B cell (primary cell): ENCODE measurements at regions of chr13 and their contacts with region 1.

Region 1: GRCh38 chr13:48975856-48976575 is at the start of gene FNDC3A:
- DNase-seq: peak; percentile 93
- ATAC-seq: peak; percentile 78
- H3K4me3 ChIP-seq: peak within 1 kb of the TSS; percentile 85 to 95 (median 88)
- H3K4me3 Mint-ChIP-seq: peak within 1 kb of the TSS; percentile 98
- H3K27ac ChIP-seq: peak within 1 kb of the TSS; percentile 95 to 96
- H3K27ac Mint-ChIP-seq: peak within 1 kb of the TSS; percentile 100
- H3K4me1 ChIP-seq: peaks cover 40 to 46% of the 10 kb centered on the region in 2 donors
- H3K4me1 Mint-ChIP-seq: peaks cover 45% of the 10 kb centered on the region
- H3K27me3 ChIP-seq: no peaks in the 10 kb centered on the region
- H3K27me3 Mint-ChIP-seq: no peaks in the 10 kb centered on the region
- CTCF ChIP-seq: no peak
- total RNA-seq, gene FNDC3A: 37.1 and 38.6 TPM in 2 replicates

Region 2: GRCh38 chr13:48000778-48001628 is 975.0 kb before region 1 on chr13 and contains the start of gene SUCLA2:
- CTCF ChIA-PET with region 1: no interaction called
- POLR2A ChIA-PET with region 1: no interaction called
- intact Hi-C with region 1: loop called (anchors 2 kb)
- DNase-seq: peak; percentile 90
- ATAC-seq: peak; percentile 100
- H3K4me3 ChIP-seq: peak within 1 kb of the TSS; percentile 72 to 89 (median 79)
- H3K4me3 Mint-ChIP-seq: peak within 1 kb of the TSS; percentile 95
- H3K27ac ChIP-seq: peak within 1 kb of the TSS; percentile 43 to 82
- H3K27ac Mint-ChIP-seq: peak within 1 kb of the TSS; percentile 72
- H3K4me1 ChIP-seq: peaks cover 13% of the 10 kb centered on the region in 2 donors
- H3K4me1 Mint-ChIP-seq: peaks cover 30% of the 10 kb centered on the region
- H3K27me3 ChIP-seq: no peaks in the 10 kb centered on the region
- H3K27me3 Mint-ChIP-seq: no peaks in the 10 kb centered on the region
- CTCF ChIP-seq: no peak
- total RNA-seq, gene SUCLA2: 33.7 and 33.9 TPM in 2 replicates

Region 3: DNA sequence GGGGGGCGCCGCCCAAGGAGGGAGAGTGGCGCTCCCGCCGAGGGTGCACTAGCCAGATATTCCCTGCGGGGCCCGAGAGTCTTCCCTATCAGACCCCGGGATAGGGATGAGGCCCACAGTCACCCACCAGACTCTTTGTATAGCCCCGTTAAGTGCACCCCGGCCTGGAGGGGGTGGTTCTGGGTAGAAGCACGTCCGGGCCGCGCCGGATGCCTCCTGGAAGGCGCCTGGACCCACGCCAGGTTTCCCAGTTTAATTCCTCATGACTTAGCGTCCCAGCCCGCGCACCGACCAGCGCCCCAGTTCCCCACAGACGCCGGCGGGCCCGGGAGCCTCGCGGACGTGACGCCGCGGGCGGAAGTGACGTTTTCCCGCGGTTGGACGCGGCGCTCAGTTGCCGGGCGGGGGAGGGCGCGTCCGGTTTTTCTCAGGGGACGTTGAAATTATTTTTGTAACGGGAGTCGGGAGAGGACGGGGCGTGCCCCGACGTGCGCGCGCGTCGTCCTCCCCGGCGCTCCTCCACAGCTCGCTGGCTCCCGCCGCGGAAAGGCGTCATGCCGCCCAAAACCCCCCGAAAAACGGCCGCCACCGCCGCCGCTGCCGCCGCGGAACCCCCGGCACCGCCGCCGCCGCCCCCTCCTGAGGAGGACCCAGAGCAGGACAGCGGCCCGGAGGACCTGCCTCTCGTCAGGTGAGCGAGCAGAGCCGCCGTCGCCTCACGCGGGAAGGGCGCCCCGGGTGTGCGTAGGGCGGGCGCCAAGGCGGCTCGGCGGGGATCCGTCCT is 672.5 kb before region 1 on chr13 and contains the start of gene RB1:
- CTCF ChIA-PET with region 1: no interaction called
- POLR2A ChIA-PET with region 1: no interaction called
- intact Hi-C with region 1: loop called (anchors 2 kb)
- DNase-seq: peak; percentile 97
- ATAC-seq: peak; percentile 69
- H3K4me3 ChIP-seq: peak within 1 kb of the TSS; percentile 70 to 98 (median 89)
- H3K4me3 Mint-ChIP-seq: peak within 1 kb of the TSS; percentile 99
- H3K27ac ChIP-seq: peak within 1 kb of the TSS; percentile 99 to 100
- H3K27ac Mint-ChIP-seq: peak within 1 kb of the TSS; percentile 100
- H3K4me1 ChIP-seq: peaks cover 22 to 26% of the 10 kb centered on the region in 2 donors
- H3K4me1 Mint-ChIP-seq: peaks cover 34% of the 10 kb centered on the region
- H3K27me3 ChIP-seq: no peaks in the 10 kb centered on the region
- H3K27me3 Mint-ChIP-seq: no peaks in the 10 kb centered on the region
- CTCF ChIP-seq: no peak
- total RNA-seq, gene RB1: 70.4 and 74.8 TPM in 2 replicates

Region 4: DNA sequence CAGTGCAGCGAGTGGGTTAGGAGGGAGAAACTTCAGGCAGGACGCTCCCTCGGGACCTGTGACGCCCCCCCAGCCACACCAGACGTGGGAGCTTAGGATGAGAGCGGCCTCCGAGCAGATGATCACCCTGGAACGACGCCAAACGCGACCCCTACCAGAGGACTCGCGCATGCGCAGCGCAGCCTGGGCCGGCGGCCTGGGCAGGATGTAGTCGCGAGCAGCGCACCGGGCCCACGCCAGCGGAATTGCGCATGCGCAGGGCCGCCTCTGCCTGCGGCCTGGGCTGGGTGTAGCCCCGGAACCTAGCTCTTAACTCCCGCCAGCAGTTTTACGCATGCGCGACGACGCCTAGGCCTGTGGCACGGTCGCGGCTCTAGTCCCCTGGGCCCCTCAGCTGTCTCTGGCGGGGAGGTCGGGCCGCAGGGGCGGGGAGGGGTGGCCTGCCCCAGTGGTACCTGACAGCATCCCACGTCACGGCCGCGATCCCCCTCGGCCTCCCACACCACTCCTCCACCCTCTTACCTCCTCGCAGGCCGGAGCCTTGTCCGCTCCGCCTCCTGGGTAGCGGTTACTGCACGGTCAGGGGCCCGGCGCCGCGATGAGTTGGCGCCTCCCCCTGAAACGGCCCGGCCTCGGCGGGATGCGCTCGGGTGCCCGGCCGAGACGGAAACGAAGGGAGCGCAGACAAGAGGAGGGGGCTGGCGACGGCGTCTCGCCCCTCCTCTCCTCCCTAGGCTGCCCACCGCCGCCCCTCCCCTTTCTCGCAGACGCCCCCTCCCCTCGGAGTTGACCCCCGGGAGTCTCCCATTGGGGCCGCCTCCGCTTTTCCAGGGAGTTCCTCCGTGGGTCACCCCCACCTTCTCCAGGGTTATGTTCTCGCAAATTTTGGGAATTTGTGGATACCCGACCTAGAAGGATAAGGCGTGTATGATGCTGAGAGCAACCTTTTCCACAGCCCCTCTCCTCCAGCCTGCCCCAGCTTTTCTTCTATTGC is 443.2 kb before region 1 on chr13 and contains the start of gene RCBTB2:
- CTCF ChIA-PET with region 1: no interaction called
- POLR2A ChIA-PET with region 1: no interaction called
- intact Hi-C with region 1: loop called (anchors 5 kb)
- DNase-seq: peak; percentile 98
- ATAC-seq: peak; percentile 89
- H3K4me3 ChIP-seq: peak within 1 kb of the TSS; percentile 54 to 92 (median 82)
- H3K4me3 Mint-ChIP-seq: peak within 1 kb of the TSS; percentile 97
- H3K27ac ChIP-seq: peak within 1 kb of the TSS; percentile 63 to 85
- H3K27ac Mint-ChIP-seq: peak within 1 kb of the TSS; percentile 98
- H3K4me1 ChIP-seq: peaks cover 20 to 24% of the 10 kb centered on the region in 2 donors
- H3K4me1 Mint-ChIP-seq: peaks cover 26% of the 10 kb centered on the region
- H3K27me3 ChIP-seq: peaks cover 0 to 15% (median 11%) of the 10 kb centered on the region in 4 experiments
- H3K27me3 Mint-ChIP-seq: peaks cover 22% of the 10 kb centered on the region
- CTCF ChIP-seq: no peak
- total RNA-seq, gene RCBTB2: 2.7 and 3.7 TPM in 2 replicates

Region 5: DNA sequence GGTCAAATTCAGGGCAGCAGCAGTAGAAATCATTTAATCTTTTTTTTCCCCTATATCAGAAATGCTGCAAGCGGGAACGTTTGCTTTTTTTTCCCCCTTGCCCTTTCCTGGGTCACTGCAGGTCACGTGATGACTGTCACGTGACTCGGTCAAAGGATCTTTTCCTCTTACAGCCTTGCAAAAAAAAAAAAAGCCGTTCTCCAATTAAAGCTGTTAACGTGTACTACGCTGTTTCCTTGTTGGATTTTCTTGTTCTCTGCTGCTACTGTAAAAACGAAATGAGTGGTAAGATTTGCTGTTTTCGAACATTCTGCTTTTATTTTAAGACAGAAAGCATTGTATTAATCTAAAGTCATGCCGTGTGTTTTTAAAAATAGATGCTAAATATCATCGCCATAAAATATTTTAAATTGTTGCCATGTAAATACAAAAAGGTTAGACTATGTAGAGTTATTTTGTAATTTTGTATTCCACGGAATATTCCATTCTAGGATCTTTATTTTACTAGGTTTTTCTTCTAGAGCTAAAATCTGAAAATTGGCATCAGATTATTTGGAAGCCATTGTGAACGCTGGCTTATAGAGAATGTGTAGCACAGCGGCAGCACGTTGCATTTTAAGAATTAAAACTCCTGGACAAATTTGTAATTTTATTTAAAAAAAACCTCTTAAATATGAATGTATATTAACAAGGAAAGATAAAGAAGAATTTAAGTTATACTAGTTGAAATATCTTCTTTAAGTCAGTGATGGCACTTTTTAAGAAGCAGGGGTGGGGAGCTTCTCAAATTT is 134.3 kb after region 1 on chr13:
- CTCF ChIA-PET with region 1: interaction called, 4 read pairs
- POLR2A ChIA-PET with region 1: no interaction called
- intact Hi-C with region 1: loop called (anchors 1 kb)
- DNase-seq: peak; percentile 86
- ATAC-seq: peak; percentile 82
- H3K4me3 ChIP-seq: peak overlapping the region; percentile 40 to 97 (median 79)
- H3K4me3 Mint-ChIP-seq: peak overlapping the region; percentile 95
- H3K27ac ChIP-seq: peak overlapping the region in 1 of 2 donors; percentile 63
- H3K27ac Mint-ChIP-seq: peak overlapping the region; percentile 89
- H3K4me1 ChIP-seq: peaks cover 3 to 6% of the 10 kb centered on the region in 2 donors
- H3K4me1 Mint-ChIP-seq: peaks cover 21% of the 10 kb centered on the region
- H3K27me3 ChIP-seq: no peaks in the 10 kb centered on the region
- H3K27me3 Mint-ChIP-seq: no peaks in the 10 kb centered on the region
- CTCF ChIP-seq: no peak

Region 6: DNA sequence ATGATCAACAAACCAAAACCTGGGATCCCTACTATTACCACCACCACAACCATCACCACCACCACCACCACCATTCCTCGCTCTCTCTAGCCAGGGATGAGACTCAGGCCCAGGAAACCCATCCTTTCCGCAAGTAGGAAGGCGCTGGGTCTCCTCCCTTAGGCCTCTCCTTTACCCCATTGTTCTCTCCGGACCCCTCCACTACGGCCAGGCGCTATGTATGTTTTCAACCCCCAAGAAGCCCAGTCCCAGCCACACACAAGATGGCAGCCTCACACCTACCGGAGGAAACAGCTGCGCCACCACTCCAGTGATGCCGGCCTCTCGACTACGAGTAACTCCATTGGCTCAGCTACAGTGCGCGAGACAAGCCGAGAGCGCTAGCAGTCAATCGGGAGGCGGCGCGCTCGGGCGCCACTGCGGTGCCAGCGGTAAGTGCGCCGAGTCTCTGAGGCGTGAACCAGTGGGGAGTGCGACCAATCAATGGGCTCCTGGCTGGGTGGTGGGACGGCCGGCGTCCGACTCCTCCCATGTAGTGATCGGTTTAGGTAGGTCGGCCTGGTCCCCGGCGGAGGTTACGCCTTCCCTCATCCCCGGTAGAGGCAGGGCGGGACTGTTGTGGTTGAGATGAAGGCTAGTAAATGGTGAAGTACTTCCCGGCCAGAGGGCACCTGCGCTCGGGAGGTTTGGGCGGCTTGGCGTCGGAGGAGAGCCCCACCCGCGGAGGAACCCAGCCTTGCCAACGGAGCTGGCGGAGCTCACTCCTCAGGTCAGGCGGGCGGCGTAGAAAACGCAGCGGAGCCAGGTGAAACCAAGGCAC is 467.9 kb after region 1 on chr13 and contains the starts of genes CAB39L and SETDB2:
- CTCF ChIA-PET with region 1: no interaction called
- POLR2A ChIA-PET with region 1: no interaction called
- intact Hi-C with region 1: loop called (anchors 5 kb)
- DNase-seq: peak; percentile 100
- ATAC-seq: peak; percentile 89
- H3K4me3 ChIP-seq: peak within 1 kb of the TSS; percentile 63 to 98 (median 81)
- H3K4me3 Mint-ChIP-seq: peak within 1 kb of the TSS; percentile 96
- H3K27ac ChIP-seq: peak within 1 kb of the TSS; percentile 97
- H3K27ac Mint-ChIP-seq: peak within 1 kb of the TSS; percentile 99
- H3K4me1 ChIP-seq: peaks cover 33 to 51% of the 10 kb centered on the region in 2 donors
- H3K4me1 Mint-ChIP-seq: peaks cover 71% of the 10 kb centered on the region
- H3K27me3 ChIP-seq: no peaks in the 10 kb centered on the region
- H3K27me3 Mint-ChIP-seq: no peaks in the 10 kb centered on the region
- CTCF ChIP-seq: peak; percentile 34
- total RNA-seq, gene CAB39L: 8.9 and 9.6 TPM in 2 replicates
- total RNA-seq, gene SETDB2: 38.2 and 40.1 TPM in 2 replicates

Region 7: DNA sequence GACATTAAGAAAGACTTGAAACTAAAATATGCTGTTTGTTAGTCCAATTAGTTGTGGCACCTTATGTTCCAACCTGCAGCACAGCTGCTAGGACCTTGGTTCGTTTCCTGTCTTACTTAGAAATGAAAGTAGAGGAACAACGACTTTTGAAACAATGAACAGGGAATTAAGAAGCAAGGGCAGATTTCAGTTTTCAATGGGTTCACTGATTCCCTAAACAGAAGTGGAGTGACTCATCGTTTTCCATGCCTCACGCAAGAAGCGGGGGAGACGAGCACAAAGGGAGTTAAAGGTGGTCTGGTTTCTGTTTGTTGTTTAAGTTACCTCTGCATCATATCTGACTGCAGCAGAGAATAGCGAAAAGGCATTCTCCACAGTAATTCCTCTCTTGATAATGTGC is 564.5 kb after region 1 on chr13:
- CTCF ChIA-PET with region 1: no interaction called
- POLR2A ChIA-PET with region 1: no interaction called
- intact Hi-C with region 1: no loop called
- DNase-seq: peak; percentile 23
- ATAC-seq: no peak
- H3K4me3 ChIP-seq: peak overlapping the region in 3 of 5 experiments; percentile 8 to 39 (median 32)
- H3K4me3 Mint-ChIP-seq: peak overlapping the region; percentile 42
- H3K27ac ChIP-seq: peak overlapping the region; percentile 7 to 20
- H3K27ac Mint-ChIP-seq: peak overlapping the region; percentile 11
- H3K4me1 ChIP-seq: peaks cover 25 to 28% of the 10 kb centered on the region in 2 donors
- H3K4me1 Mint-ChIP-seq: peaks cover 35% of the 10 kb centered on the region
- H3K27me3 ChIP-seq: no peaks in the 10 kb centered on the region
- H3K27me3 Mint-ChIP-seq: no peaks in the 10 kb centered on the region
- CTCF ChIP-seq: no peak